GM12878 (cell line): ENCODE measurements at regions of chr4 and their contacts with region 1.

Region 1: DNA sequence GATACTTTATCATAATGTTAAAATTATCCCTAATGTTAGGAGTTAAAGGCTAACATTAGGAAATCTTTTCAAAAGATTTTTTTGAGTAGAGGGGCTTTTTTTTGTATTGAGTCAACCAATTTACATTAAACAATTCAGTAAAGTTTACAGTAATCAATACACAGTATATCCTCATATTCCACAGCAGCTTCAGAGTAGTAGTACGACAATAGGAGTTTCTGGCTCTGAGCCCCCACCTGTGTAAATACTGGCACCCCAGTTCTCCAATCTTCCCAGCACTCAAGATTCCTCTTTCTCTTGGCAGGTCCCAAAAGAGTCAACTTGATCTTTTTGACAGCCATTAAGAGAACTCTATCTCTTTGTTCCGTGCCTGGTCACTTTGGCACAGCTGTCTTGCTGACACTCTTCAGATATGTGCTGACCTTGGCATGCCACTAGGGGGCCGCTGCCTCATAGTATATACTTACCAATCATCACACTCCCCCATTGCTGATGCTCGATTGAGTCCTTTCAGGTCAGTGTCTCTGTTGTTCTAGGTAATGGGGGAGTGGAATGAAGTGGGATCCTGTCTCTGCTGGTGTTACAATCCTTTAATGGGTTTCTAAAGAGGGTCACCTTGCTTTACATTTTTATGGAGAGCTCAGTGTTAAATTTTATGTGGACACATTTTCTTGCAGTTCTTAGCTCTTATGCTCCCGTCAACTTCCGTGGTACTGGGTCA is 19.5 kb upstream of the CCNI start:
- DNase-seq: no peak
- ATAC-seq: peak; percentile 100
- H3K4me3 ChIP-seq: no peak overlapping the region
- H3K27ac ChIP-seq: no peak overlapping the region
- H3K4me1 ChIP-seq: no peaks in the 10 kb centered on the region
- H3K27me3 ChIP-seq: no peaks in the 10 kb centered on the region
- CTCF ChIP-seq: peak; percentile 86 to 95 (median 91)
- EP300 ChIP-seq: no peak
- POLR2A ChIP-seq: no peak
- RAD21 ChIP-seq: peak; percentile 80

Region 2: GRCh38 chr4:75180790-75181776 is 1914.2 kb before region 1 on chr4:
- CTCF ChIA-PET with region 1: no interaction called
- POLR2A ChIA-PET with region 1: no interaction called
- RAD21 ChIA-PET with region 1: no interaction called
- SMC1A ChIA-PET with region 1: no interaction called
- in situ Hi-C with region 1: no loop called
- intact Hi-C with region 1: no loop called
- DNase-seq: peak; percentile 48
- ATAC-seq: peak; percentile 94
- H3K4me3 ChIP-seq: no peak overlapping the region
- H3K27ac ChIP-seq: 0 out of 2 replicates have a peak overlapping the region, but pooled peaks have one; percentile 39
- H3K4me1 ChIP-seq: peaks cover 13% of the 10 kb centered on the region
- H3K27me3 ChIP-seq: no peaks in the 10 kb centered on the region
- CTCF ChIP-seq: no peak
- EP300 ChIP-seq: no peak
- POLR2A ChIP-seq: no peak
- RAD21 ChIP-seq: no peak

Region 3: DNA sequence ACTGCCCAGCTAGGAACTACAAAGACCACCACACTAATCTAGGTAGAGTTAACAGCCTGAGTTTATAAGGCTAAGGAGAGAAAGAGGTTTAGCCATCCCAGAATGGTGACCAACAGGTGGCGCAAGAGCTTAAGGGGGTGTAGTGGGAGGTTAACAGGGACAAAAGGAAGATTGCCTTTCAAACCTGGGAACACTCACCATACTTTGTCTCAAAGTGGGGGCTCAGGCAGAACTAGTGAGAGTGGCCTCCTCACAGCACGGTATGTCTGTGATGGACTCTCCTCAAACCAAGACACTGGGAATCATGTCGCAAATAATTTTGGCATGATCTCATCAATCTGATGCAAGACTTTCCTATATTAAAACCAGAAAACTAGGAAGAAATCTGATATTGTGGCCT is 42.9 kb before region 1 on chr4:
- CTCF ChIA-PET with region 1: interaction called, 32 read pairs
- POLR2A ChIA-PET with region 1: no interaction called
- RAD21 ChIA-PET with region 1: interaction called, 7 read pairs
- SMC1A ChIA-PET with region 1: interaction called, 20 read pairs
- in situ Hi-C with region 1: no loop called
- intact Hi-C with region 1: no loop called
- DNase-seq: no peak
- ATAC-seq: peak; percentile 87
- H3K4me3 ChIP-seq: no peak overlapping the region
- H3K27ac ChIP-seq: no peak overlapping the region
- H3K4me1 ChIP-seq: no peaks in the 10 kb centered on the region
- H3K27me3 ChIP-seq: no peaks in the 10 kb centered on the region
- CTCF ChIP-seq: peak; percentile 73 to 77 (median 73)
- EP300 ChIP-seq: no peak
- POLR2A ChIP-seq: no peak
- RAD21 ChIP-seq: peak; percentile 72

Region 4: DNA sequence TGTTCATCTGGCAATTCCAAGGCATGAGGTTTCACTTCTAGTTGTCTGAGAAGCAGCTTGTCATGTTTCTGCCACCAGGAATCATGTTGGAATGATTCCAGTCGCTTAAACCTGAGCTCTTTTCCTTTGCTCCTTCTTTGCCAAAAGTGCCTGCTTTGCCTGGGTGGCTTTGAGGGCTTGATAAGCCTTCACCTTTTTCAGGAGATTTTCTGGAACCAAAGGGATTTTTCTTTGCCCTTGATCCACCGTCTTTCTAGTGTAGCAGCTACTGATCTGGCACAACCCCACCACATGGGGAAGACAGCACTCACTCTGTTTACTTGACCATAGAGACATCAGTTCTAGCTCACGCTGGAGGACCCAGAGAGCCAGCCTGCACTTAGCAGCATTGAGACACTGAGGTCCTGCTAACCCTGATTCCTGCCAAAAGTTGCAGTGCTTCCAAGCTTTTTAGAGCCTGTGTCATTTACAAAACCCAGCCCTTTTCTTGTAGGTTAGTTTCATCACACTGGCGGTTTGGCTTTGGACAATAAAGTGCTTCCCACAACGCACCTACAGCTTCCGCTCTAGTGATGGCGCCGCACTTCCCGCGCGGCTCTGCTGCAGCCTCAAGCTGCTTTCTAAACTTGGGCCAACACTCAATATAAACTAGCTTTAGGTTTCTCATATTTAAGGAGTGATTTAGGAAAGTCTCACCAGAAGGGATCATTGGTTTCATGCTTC is 12.2 kb before region 1 on chr4:
- CTCF ChIA-PET with region 1: interaction called, 16 read pairs
- POLR2A ChIA-PET with region 1: interaction called, 4 read pairs
- RAD21 ChIA-PET with region 1: interaction called, 6 read pairs
- SMC1A ChIA-PET with region 1: interaction called, 12 read pairs
- in situ Hi-C with region 1: no loop called
- intact Hi-C with region 1: no loop called
- DNase-seq: no peak
- ATAC-seq: no peak
- H3K4me3 ChIP-seq: no peak overlapping the region
- H3K27ac ChIP-seq: no peak overlapping the region
- H3K4me1 ChIP-seq: no peaks in the 10 kb centered on the region
- H3K27me3 ChIP-seq: no peaks in the 10 kb centered on the region
- CTCF ChIP-seq: no peak
- EP300 ChIP-seq: no peak
- POLR2A ChIP-seq: no peak
- RAD21 ChIP-seq: no peak

Region 5: GRCh38 chr4:77126809-77127208 is 31.5 kb after region 1 on chr4:
- CTCF ChIA-PET with region 1: interaction called, 13 read pairs
- POLR2A ChIA-PET with region 1: no interaction called
- RAD21 ChIA-PET with region 1: interaction called, 11 read pairs
- SMC1A ChIA-PET with region 1: interaction called, 4 read pairs
- in situ Hi-C with region 1: no loop called
- intact Hi-C with region 1: no loop called
- DNase-seq: no peak
- ATAC-seq: peak; percentile 78
- H3K4me3 ChIP-seq: no peak overlapping the region
- H3K27ac ChIP-seq: no peak overlapping the region
- H3K4me1 ChIP-seq: peaks cover 6% of the 10 kb centered on the region; the same call in 1 of the 2 replicates
- H3K27me3 ChIP-seq: no peaks in the 10 kb centered on the region
- CTCF ChIP-seq: no peak
- EP300 ChIP-seq: no peak
- POLR2A ChIP-seq: no peak
- RAD21 ChIP-seq: no peak

Region 6: GRCh38 chr4:77163636-77164035 is 68.4 kb after region 1 on chr4:
- CTCF ChIA-PET with region 1: interaction called, 40 read pairs
- POLR2A ChIA-PET with region 1: interaction called, 5 read pairs
- RAD21 ChIA-PET with region 1: interaction called, 7 read pairs
- SMC1A ChIA-PET with region 1: interaction called, 9 read pairs
- in situ Hi-C with region 1: no loop called
- intact Hi-C with region 1: loop called (anchors 5 kb)
- DNase-seq: no peak
- ATAC-seq: no peak
- H3K4me3 ChIP-seq: no peak overlapping the region
- H3K27ac ChIP-seq: no peak overlapping the region
- H3K4me1 ChIP-seq: no peaks in the 10 kb centered on the region
- H3K27me3 ChIP-seq: no peaks in the 10 kb centered on the region
- CTCF ChIP-seq: no peak
- EP300 ChIP-seq: no peak
- POLR2A ChIP-seq: no peak
- RAD21 ChIP-seq: no peak

Region 7: DNA sequence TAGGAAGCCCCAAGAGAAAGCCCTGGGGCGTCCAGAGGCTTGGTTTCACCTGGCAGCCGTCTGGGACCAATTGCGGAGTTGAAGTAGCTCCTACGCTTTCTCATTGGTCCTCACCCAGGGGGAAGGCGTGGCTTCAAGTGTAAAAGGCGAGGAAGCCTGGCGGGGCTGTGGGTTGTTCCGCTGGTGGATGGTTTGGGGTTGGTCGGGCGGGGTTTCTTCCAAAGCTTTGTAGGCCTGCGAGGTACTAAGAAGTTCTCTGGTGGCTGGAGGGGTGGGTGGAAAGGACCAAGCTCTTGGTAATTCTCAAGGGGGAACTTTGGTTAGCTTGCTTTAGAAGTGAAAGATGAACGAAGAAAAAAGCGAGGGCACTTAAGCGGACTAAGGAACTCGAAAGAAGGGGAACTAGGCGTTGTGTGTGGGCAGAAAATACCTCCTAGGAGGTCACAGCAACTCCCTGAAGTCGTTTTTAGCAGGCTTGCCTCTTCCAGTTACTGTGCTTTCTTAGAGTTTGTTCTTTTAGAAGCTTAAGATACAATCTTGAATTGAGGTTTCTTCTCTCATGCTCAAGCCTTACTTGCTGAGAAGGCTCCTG is 98.3 kb after region 1 on chr4:
- CTCF ChIA-PET with region 1: interaction called, 535 read pairs
- POLR2A ChIA-PET with region 1: interaction called, 4 read pairs
- RAD21 ChIA-PET with region 1: interaction called, 229 read pairs
- SMC1A ChIA-PET with region 1: interaction called, 286 read pairs
- in situ Hi-C with region 1: no loop called
- intact Hi-C with region 1: no loop called
- DNase-seq: peak; percentile 69
- ATAC-seq: peak; percentile 96
- H3K4me3 ChIP-seq: peak overlapping the region; percentile 32; the same call in 1 of the 2 replicates
- H3K27ac ChIP-seq: peak overlapping the region; percentile 90
- H3K4me1 ChIP-seq: peaks cover 37% of the 10 kb centered on the region
- H3K27me3 ChIP-seq: no peaks in the 10 kb centered on the region
- CTCF ChIP-seq: no peak
- EP300 ChIP-seq: peak in 1 of 2 experiments; percentile 59; a peak in 1 of 4 replicates
- POLR2A ChIP-seq: peak; percentile 72
- RAD21 ChIP-seq: no peak

Region 8: GRCh38 chr4:77308843-77309242 is 213.6 kb after region 1 on chr4:
- CTCF ChIA-PET with region 1: interaction called, 4 read pairs
- POLR2A ChIA-PET with region 1: no interaction called
- RAD21 ChIA-PET with region 1: no interaction called
- SMC1A ChIA-PET with region 1: no interaction called
- in situ Hi-C with region 1: no loop called
- intact Hi-C with region 1: loop called (anchors 10 kb)
- DNase-seq: no peak
- ATAC-seq: peak; percentile 82
- H3K4me3 ChIP-seq: no peak overlapping the region
- H3K27ac ChIP-seq: no peak overlapping the region
- H3K4me1 ChIP-seq: no peaks in the 10 kb centered on the region
- H3K27me3 ChIP-seq: no peaks in the 10 kb centered on the region
- CTCF ChIP-seq: peak; percentile 29 to 52 (median 30); a peak in 4 of 6 replicates
- EP300 ChIP-seq: no peak
- POLR2A ChIP-seq: no peak
- RAD21 ChIP-seq: peak; percentile 46

Region 9: GRCh38 chr4:77652237-77652897 is 557.1 kb after region 1 on chr4:
- CTCF ChIA-PET with region 1: no interaction called
- POLR2A ChIA-PET with region 1: no interaction called
- RAD21 ChIA-PET with region 1: no interaction called
- SMC1A ChIA-PET with region 1: no interaction called
- in situ Hi-C with region 1: no loop called
- intact Hi-C with region 1: no loop called
- DNase-seq: no peak
- ATAC-seq: no peak
- H3K4me3 ChIP-seq: no peak overlapping the region
- H3K27ac ChIP-seq: no peak overlapping the region
- H3K4me1 ChIP-seq: no peaks in the 10 kb centered on the region
- H3K27me3 ChIP-seq: no peaks in the 10 kb centered on the region; a peak in 1 of 4 replicates
- CTCF ChIP-seq: no peak
- EP300 ChIP-seq: no peak
- POLR2A ChIP-seq: no peak
- RAD21 ChIP-seq: no peak